ENCODE measurements at regions of chr16 and their contacts with region 1.

Region 1: DNA sequence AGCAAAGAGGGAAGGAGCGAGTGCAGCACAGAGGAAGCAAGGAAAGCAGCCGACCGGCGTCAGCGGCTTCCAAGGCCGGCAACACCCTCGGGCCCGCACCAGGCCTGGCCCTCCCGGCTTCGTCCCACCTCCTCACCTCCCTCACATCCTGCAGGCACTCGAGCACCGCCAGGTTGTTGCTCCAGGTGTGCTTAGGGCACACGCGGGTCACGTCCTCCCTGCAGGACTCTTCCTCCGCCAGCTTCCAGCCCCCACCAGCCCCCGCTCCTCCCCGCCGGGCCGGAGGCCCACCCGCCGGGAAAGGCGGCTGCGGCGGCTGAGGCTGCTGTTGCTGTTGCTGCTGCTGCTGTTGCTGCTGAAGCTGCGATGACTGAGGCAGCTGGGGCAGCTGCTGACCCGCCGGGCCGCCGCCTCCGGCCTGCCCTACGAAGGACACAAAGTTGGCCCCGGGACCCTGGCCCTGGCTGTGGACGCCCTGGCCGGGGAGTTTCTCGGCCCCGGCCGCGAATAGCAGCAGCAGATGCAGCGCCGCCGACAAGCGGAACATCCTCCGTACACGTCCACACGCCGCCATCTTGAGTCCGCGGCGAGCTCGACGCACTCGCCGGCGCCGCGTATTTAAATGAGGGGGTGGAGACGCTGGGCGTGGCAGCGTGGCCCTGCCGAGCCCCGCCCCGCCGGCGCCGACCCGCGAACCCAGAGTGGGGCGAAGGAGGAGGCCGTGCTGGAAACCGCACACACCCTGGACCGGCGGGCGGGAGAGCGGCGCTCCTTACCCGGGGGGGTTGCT is at the start of gene GLG1:
- DNase-seq: peak; percentile 97
- total RNA-seq, gene GLG1: 110 TPM

Region 2: DNA sequence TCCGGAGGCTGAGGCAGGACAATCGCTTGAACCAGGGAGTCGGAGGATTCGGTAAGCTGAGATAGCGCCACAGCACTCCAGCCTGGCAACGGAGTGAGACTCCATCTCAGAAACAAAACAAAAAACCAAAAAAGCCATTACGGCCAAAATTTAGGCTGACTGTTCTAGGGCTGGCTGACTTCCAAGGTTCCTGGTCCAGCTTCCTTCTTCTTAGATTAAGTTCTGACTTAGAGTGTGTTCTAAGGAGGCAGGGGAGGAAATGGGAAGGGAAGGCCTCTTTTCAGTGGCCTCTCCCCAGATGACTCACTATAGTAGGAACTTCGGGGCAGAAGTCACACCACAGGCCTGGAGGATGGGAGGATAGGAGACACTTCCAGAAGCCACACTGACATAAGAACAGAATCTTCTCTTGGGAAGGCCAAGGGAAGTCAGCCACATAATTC is 157.7 kb before region 1 on chr16:
- intact Hi-C with region 1: no loop called
- DNase-seq: peak; percentile 84

Region 3: DNA sequence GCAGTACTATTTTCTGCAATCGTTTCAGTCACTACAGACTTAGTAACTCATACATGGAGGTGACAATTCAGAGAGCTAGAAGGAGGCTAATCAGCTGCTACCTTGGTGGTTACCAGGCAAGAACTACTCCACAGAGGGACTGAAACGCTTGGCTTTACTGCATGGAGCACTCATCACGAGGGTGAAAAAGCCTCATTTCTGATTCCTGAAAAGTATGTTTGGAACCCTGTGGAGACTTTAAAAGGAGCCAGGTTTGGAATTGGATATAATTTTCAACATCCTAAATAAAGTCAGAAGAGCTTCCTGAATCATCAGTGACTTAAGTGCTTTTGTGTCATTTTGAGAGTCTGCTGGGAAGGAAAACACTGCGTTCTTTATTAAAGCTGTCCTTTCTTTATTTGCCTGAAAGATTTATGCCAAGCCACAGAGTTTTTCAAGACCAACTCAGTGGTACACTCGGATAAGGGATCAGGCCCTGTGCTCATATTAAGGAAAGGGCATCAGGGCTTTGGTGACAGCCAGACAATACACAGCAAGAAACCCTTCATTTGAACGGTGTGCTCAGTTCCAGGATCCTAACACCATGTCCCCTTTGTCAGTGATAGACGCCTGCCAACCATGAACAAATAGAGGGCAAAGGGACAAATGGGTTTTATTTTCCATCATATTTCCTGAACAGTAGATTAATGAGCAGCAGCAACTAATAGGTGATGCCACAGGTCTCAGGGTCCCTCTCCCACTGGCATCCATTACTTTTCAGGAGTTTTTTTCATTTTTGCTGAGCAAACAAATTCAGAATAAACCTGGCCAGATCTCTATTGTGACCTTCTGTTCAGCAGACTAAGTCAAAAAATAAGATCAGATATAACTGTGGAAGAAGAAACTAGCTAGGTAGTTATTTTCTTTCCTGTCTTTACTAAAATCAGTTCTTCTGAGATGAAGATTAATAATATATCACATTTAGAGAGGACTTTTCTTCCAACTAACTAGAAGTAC is 104.9 kb before region 1 on chr16:
- intact Hi-C with region 1: loop called (anchors 5 kb)
- DNase-seq: no peak

Region 4: DNA sequence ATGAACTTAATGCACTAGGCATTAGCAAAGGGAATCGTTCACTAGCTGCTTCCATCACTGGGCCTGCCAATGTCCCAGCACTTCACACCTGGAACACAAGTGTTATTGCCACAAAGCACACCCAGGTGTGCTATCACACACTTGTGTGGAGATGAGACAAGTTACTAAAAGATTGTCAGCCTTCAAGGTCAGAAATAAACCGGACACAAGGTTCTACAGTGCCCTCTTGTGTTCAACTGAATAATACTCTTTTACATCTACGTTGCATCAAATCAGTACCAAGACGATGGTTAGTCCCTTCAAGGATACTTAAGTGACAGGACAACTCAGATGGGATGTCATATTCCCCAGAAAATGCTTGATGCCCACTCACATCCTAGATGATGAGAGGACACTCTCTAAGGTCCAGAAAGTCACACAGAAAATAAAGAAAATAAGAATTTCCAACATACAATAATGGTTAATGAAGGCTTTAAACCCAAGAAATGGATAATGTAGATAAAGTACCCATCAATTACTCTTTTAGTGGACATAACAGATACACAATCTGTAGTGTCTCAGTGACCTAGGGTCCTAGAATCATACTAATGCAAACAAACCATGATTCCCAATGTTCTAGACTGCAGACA is 16.6 kb after region 1 on chr16:
- intact Hi-C with region 1: no loop called
- DNase-seq: no peak

Measured in cardiac septum (tissue), 1 donor.